ENCODE measurements at regions of chr19 and their contacts with region 1.

Region 1: DNA sequence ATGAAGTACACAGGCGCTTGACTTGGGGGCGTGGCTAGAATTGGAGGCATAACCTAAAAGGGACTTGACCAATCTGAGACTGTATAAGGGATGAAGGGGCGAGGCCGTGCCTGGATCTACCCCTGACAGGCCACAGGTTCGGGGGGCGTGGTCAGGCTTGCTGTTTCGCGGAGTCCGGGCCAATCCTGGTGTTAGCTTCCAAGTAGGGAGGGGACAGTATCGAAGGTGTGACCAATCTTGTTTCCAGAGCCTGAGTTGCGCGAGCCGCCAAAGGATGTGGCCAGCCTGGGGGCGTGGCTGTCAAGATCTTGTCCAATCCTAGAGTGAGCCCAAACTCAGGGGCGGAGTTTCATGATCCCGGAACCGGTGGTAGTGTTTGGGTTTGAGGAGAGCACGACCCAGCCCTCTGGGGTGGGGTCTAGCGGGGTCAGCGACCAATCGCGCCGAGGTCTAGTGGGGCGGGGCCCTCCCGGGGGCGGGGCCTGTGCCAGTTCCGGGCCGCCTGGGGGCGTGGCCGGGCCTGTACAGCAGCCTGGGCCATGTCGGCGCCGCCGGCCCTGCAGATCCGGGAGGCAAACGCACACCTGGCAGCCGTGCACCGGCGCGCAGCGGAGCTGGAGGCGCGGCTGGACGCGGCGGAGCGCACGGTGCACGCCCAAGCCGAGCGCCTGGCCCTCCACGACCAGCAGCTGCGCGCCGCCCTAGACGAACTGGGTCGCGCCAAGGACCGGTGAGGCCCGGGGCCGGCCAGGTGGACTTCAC is at the start of gene VMAC:
- DNase-seq: peak; percentile 100
- ATAC-seq: peak; percentile 87
- H3K4me3 Mint-ChIP-seq: peak within 1 kb of the TSS; percentile 94
- H3K27ac Mint-ChIP-seq: peak within 1 kb of the TSS; percentile 98
- H3K4me1 Mint-ChIP-seq: peaks cover 32% of the 10 kb centered on the region
- H3K27me3 Mint-ChIP-seq: no peaks in the 10 kb centered on the region
- total RNA-seq, gene VMAC: 2.3 to 2.8 TPM

Region 2: DNA sequence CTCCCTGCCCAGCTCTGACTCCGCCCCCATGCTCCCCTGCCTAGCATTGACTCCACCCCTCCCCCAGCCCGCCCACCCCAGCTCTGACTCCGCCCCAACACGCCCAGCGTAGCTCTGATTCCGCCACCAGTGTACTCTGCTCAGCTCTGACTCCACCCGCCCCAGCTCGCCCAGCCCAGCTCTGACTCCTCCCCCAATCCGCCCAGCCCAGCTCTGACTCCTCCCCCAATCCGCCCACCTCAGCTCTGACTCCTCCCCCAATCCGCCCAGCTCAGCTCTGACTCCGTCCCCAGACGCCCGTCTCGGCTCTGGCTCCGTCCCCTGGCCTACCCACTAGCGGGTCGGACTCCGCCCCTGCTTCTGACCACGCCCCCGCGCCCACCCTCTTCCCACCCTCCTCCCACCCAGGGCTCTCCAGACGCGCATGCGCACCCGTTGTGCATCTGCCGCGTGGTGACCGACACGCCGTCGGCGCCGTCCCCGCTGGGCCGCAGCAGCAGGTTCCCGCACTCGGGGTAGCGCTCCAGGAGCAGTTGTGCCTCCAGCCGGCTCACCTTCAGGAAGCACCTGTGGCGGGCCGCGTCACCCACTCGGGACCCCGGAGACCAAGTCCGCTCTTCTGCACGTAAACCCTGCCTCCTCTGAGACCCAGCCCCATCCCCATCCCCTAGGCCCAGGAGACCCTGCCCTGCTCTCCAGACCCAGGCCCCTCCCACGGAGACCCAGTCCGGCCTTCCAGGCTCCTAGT is 1576.1 kb before region 1 on chr19:
- CTCF ChIA-PET with region 1: no interaction called
- POLR2A ChIA-PET with region 1: no interaction called
- intact Hi-C with region 1: loop called in 1 of 2 experiments (anchors 5 kb)
- DNase-seq: peak; percentile 100
- ATAC-seq: peak; percentile 85
- H3K4me3 Mint-ChIP-seq: peak overlapping the region; percentile 93
- H3K27ac Mint-ChIP-seq: peak overlapping the region; percentile 94
- H3K4me1 Mint-ChIP-seq: peaks cover 27% of the 10 kb centered on the region
- H3K27me3 Mint-ChIP-seq: no peaks in the 10 kb centered on the region

Region 3: GRCh38 chr19:5622463-5623396 is 281.8 kb before region 1 on chr19 and contains the starts of genes SAFB and SAFB2:
- CTCF ChIA-PET with region 1: no interaction called
- POLR2A ChIA-PET with region 1: interaction called, 3 read pairs
- intact Hi-C with region 1: loop called in 1 of 2 experiments (anchors 1 kb)
- DNase-seq: peak; percentile 100
- ATAC-seq: peak; percentile 92
- H3K4me3 Mint-ChIP-seq: peak within 1 kb of the TSS; percentile 100
- H3K27ac Mint-ChIP-seq: peak within 1 kb of the TSS; percentile 100
- H3K4me1 Mint-ChIP-seq: peaks cover 66% of the 10 kb centered on the region
- H3K27me3 Mint-ChIP-seq: no peaks in the 10 kb centered on the region
- total RNA-seq, gene SAFB: 100 to 118 TPM
- total RNA-seq, gene SAFB2: 65.0 to 78.6 TPM

Region 4: GRCh38 chr19:5645409-5645808 is 259.1 kb before region 1 on chr19:
- CTCF ChIA-PET with region 1: no interaction called
- POLR2A ChIA-PET with region 1: no interaction called
- intact Hi-C with region 1: no loop called
- DNase-seq: no peak
- ATAC-seq: no peak
- H3K4me3 Mint-ChIP-seq: no peak overlapping the region
- H3K27ac Mint-ChIP-seq: peak overlapping the region; percentile 9
- H3K4me1 Mint-ChIP-seq: peaks cover 14% of the 10 kb centered on the region
- H3K27me3 Mint-ChIP-seq: no peaks in the 10 kb centered on the region

Region 5: GRCh38 chr19:5790573-5791520 is 113.7 kb before region 1 on chr19 and contains the start of gene DUS3L:
- CTCF ChIA-PET with region 1: no interaction called
- POLR2A ChIA-PET with region 1: interaction called, 4 read pairs
- intact Hi-C with region 1: loop called (anchors 1 kb)
- DNase-seq: peak; percentile 98
- ATAC-seq: peak; percentile 97
- H3K4me3 Mint-ChIP-seq: peak within 1 kb of the TSS; percentile 98
- H3K27ac Mint-ChIP-seq: peak within 1 kb of the TSS; percentile 100
- H3K4me1 Mint-ChIP-seq: peaks cover 13% of the 10 kb centered on the region
- H3K27me3 Mint-ChIP-seq: no peaks in the 10 kb centered on the region
- total RNA-seq, gene DUS3L: 59.4 to 63.9 TPM

Region 6: DNA sequence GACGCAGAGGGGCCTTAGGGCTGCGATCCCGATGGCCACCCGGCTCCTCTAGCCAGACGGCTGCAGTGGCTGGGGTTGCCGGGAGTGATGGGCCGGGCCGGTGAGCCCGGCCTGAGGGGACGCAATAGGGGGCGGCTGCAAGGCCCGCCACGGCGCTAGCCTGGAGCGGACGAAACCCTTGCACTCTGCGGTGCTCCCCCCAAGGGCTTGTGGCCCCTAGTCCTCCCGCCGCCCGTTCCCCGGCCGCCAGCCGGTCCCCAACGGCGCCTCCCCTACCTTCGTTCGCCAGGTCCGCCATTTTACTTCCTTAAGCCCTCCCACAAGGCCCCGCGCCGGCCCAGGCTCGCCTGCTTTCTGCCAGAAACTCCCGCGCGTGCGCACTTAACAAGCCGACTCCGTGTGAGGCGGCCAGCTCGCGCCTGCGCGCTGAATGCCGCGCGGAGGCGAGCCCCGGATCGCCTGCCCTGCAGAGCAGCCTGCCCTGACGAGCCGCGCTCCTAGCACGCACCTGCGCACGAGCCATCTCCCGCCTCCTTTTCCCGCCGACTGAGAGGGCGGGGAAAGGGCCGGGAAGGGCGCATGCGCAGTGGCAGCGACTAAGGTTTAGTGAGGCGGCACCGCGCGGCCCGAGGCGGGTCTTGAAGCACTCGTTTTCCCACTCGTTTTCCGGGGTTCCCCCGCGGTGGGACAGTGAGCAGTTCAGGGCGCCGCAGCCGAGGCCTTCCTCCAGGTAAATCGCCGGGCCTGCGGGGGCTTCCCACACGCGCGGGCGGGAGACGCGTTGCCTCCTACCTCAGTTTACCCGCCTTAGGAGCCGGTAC is 73.5 kb after region 1 on chr19 and contains the start of gene RANBP3:
- CTCF ChIA-PET with region 1: interaction called, 3 read pairs
- POLR2A ChIA-PET with region 1: interaction called, 4 read pairs
- intact Hi-C with region 1: loop called (anchors 1 kb)
- DNase-seq: peak; percentile 99
- ATAC-seq: peak; percentile 92
- H3K4me3 Mint-ChIP-seq: peak within 1 kb of the TSS; percentile 94
- H3K27ac Mint-ChIP-seq: peak within 1 kb of the TSS; percentile 90
- H3K4me1 Mint-ChIP-seq: peaks cover 56% of the 10 kb centered on the region
- H3K27me3 Mint-ChIP-seq: no peaks in the 10 kb centered on the region
- total RNA-seq, gene RANBP3: 85.5 to 103 TPM

Region 7: GRCh38 chr19:6279931-6280591 is 375.5 kb after region 1 on chr19 and contains the start of gene MLLT1:
- CTCF ChIA-PET with region 1: no interaction called
- POLR2A ChIA-PET with region 1: no interaction called
- intact Hi-C with region 1: loop called in 1 of 2 experiments (anchors 1 kb)
- DNase-seq: peak; percentile 98
- ATAC-seq: peak; percentile 98
- H3K4me3 Mint-ChIP-seq: peak within 1 kb of the TSS; percentile 98
- H3K27ac Mint-ChIP-seq: peak within 1 kb of the TSS; percentile 93
- H3K4me1 Mint-ChIP-seq: peaks cover 38% of the 10 kb centered on the region
- H3K27me3 Mint-ChIP-seq: peaks cover 2% of the 10 kb centered on the region
- total RNA-seq, gene MLLT1: 45.0 to 46.6 TPM

Region 8: GRCh38 chr19:6460101-6460853 is 555.7 kb after region 1 on chr19:
- CTCF ChIA-PET with region 1: no interaction called
- POLR2A ChIA-PET with region 1: no interaction called
- intact Hi-C with region 1: loop called in 1 of 2 experiments (anchors 1 kb)
- DNase-seq: peak; percentile 99
- ATAC-seq: peak; percentile 83
- H3K4me3 Mint-ChIP-seq: peak overlapping the region; percentile 78
- H3K27ac Mint-ChIP-seq: peak overlapping the region; percentile 82
- H3K4me1 Mint-ChIP-seq: peaks cover 18% of the 10 kb centered on the region
- H3K27me3 Mint-ChIP-seq: no peaks in the 10 kb centered on the region

Measured in activated CD4-positive, alpha-beta T cell treated with anti-CD3 and anti-CD28 coated beads for 36 hours (primary cell).